ENCODE measurements at regions of chr1 and their contacts with region 1.

Region 1: GRCh38 chr1:45569962-45570581 is 13.8 kb upstream of the NASP start:
- DNase-seq: peak in 1 of 2 donors; percentile 81
- H3K4me3 ChIP-seq: no peak overlapping the region
- H3K27ac ChIP-seq: peak overlapping the region; percentile 8 to 35
- H3K4me1 ChIP-seq: no peaks in the 10 kb centered on the region
- H3K27me3 ChIP-seq: no peaks in the 10 kb centered on the region
- CTCF ChIP-seq: peak; percentile 95 to 96 (median 96)

Region 2: GRCh38 chr1:45359882-45360513 is 210.1 kb before region 1 on chr1:
- intact Hi-C with region 1: loop called (anchors 1 kb)
- DNase-seq: peak in 1 of 2 donors; percentile 83
- H3K4me3 ChIP-seq: peak overlapping the region in 1 of 2 donors; percentile 43
- H3K27ac ChIP-seq: peak overlapping the region; percentile 63 to 77
- H3K4me1 ChIP-seq: peaks cover 4 to 8% of the 10 kb centered on the region in 2 donors
- H3K27me3 ChIP-seq: no peaks in the 10 kb centered on the region
- CTCF ChIP-seq: peak; percentile 66 to 79 (median 75)

Region 3: GRCh38 chr1:45442272-45442671 is 127.8 kb before region 1 on chr1:
- intact Hi-C with region 1: no loop called
- DNase-seq: no peak
- H3K4me3 ChIP-seq: no peak overlapping the region
- H3K27ac ChIP-seq: no peak overlapping the region
- H3K4me1 ChIP-seq: no peaks in the 10 kb centered on the region
- H3K27me3 ChIP-seq: no peaks in the 10 kb centered on the region
- CTCF ChIP-seq: no peak

Region 4: DNA sequence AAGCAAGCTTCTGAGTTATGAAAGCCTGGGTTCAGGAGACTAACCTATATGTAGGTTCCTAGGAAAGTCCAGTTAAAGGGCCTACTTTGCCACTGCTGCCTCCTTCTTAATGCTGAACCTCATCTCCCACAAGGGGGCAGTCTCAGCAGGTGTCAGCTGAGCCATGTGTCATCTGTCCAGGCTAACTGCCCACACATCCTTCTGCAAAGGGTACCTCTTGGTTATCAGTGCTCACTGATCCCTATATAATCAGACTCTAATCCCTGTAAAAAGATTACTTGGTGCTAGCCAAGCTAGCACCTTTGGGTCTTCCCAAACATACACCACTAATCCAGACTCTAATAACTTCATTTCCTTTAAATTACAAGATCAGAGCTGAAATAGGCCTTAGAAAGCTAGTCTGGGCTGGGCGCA is 57.4 kb before region 1 on chr1:
- intact Hi-C with region 1: loop called (anchors 1 kb)
- DNase-seq: peak in 1 of 2 donors; percentile 71
- H3K4me3 ChIP-seq: no peak overlapping the region
- H3K27ac ChIP-seq: no peak overlapping the region
- H3K4me1 ChIP-seq: no peaks in the 10 kb centered on the region
- H3K27me3 ChIP-seq: no peaks in the 10 kb centered on the region
- CTCF ChIP-seq: peak; percentile 41 to 61 (median 45)

Region 5: GRCh38 chr1:45521398-45522323 is 48.4 kb before region 1 on chr1 and contains the start of gene PRDX1:
- intact Hi-C with region 1: loop called (anchors 2 kb)
- DNase-seq: peak; percentile 87 to 98
- H3K4me3 ChIP-seq: peak within 1 kb of the TSS; percentile 60 to 93
- H3K27ac ChIP-seq: peak within 1 kb of the TSS; percentile 90 to 96
- H3K4me1 ChIP-seq: peaks cover 0 to 13% of the 10 kb centered on the region in 2 donors
- H3K27me3 ChIP-seq: no peaks in the 10 kb centered on the region
- CTCF ChIP-seq: peak in 1 of 3 experiments; percentile 7
- total RNA-seq, gene PRDX1: 245 TPM

Measured in ascending aorta (tissue), 2 donors.